ENCODE measurements at regions of chr9 and their contacts with region 1.

Region 1: DNA sequence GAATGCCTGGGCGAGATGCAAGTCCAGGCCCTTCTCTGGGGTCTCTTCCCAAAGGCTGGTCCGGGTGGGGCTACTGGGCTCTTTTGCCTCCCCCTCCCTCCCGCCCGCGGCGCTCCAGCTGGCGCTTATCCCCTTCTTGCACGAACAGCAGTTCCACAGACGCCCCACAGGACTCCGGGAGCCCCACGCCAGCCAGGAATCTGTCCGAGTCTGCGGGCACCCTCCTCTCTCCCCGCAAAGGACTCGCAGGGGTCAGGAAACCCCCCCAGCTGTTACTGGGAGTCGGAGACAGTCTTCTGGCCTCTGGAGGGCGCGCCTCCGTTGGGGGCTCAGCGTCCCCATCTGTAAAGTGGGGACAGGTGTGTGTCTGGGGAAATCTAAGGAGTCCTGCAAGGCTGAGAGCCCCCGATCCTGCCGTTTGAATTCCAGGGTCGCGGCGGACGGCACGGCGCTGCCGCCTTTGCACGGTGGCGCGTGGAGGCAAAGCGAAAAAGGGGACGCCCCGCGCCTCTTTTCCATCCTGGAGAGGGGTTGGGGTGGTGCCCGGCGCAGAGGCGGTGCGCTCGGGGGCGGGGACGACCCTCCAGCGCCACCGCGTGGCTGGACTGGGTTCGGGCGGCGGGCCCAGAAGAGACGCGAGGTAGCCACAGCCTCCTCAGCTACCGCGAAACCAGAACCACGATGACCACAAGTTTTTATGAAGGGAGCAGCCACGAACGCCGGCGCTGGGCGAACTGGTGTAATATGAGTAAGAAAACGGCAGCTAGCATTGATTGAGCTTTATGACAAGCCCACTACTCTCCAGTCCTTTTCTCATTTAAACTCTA is 2.9 kb upstream of the CCIN start:
- DNase-seq: peak; percentile 69 to 81
- H3K4me3 ChIP-seq: peak overlapping the region; percentile 37; the same call in 1 of the 2 replicates
- H3K27ac ChIP-seq: no peak overlapping the region
- H3K4me1 ChIP-seq: 0 out of 2 replicates have a peak, but pooled peaks cover 3% of the 10 kb centered on the region
- H3K27me3 ChIP-seq: no peaks in the 10 kb centered on the region
- CTCF ChIP-seq: peak; percentile 79

Region 2: GRCh38 chr9:36039696-36040095 is 126.6 kb before region 1 on chr9:
- CTCF ChIA-PET with region 1: interaction called, 13 read pairs
- POLR2A ChIA-PET with region 1: no interaction called
- intact Hi-C with region 1: no loop called
- DNase-seq: no peak
- H3K4me3 ChIP-seq: no peak overlapping the region
- H3K27ac ChIP-seq: no peak overlapping the region; the same call in 1 of the 2 replicates
- H3K4me1 ChIP-seq: peaks cover 19% of the 10 kb centered on the region
- H3K27me3 ChIP-seq: no peaks in the 10 kb centered on the region
- CTCF ChIP-seq: no peak

Region 3: GRCh38 chr9:36276781-36277181 is 110.5 kb after region 1 on chr9:
- CTCF ChIA-PET with region 1: no interaction called
- POLR2A ChIA-PET with region 1: no interaction called
- intact Hi-C with region 1: no loop called
- DNase-seq: peak; percentile 50 to 88
- H3K4me3 ChIP-seq: peak overlapping the region; percentile 74
- H3K27ac ChIP-seq: peak overlapping the region; percentile 91
- H3K4me1 ChIP-seq: peaks cover 47% of the 10 kb centered on the region
- H3K27me3 ChIP-seq: no peaks in the 10 kb centered on the region
- CTCF ChIP-seq: no peak